ENCODE measurements at regions of chr17 and their contacts with region 1.

Region 1: GRCh38 chr17:48625495-48626244 is 488 bp downstream of the HOXB9 start:
- DNase-seq: peak in 3 of 5 donors; percentile 39 to 59 (median 48)
- H3K4me3 ChIP-seq: peak overlapping the region in 1 of 2 donors; percentile 44
- H3K4me3 Mint-ChIP-seq: peak overlapping the region; percentile 69 to 89 (median 84)
- H3K27ac ChIP-seq: no peak overlapping the region
- H3K27ac Mint-ChIP-seq: peak overlapping the region in 2 of 7 donors; percentile 18 to 62
- H3K4me1 ChIP-seq: peaks cover 28% of the 10 kb centered on the region
- H3K4me1 Mint-ChIP-seq: peaks cover 8 to 35% (median 8%) of the 10 kb centered on the region in 4 donors
- H3K27me3 ChIP-seq: peaks cover 70% of the 10 kb centered on the region
- H3K27me3 Mint-ChIP-seq: peaks cover 69 to 80% of the 10 kb centered on the region in 2 donors

Region 2: GRCh38 chr17:48610282-48611211 is 15.1 kb before region 1 on chr17 and contains the start of gene HOXB7:
- CTCF ChIA-PET with region 1: interaction called, 16 read pairs
- POLR2A ChIA-PET with region 1: interaction called, 6 read pairs
- intact Hi-C with region 1: loop called (anchors 2 kb)
- DNase-seq: peak in 2 of 5 donors; percentile 50 to 56
- H3K4me3 ChIP-seq: peak within 1 kb of the TSS; percentile 64 to 76
- H3K4me3 Mint-ChIP-seq: peak within 1 kb of the TSS; percentile 86 to 93 (median 90)
- H3K27ac ChIP-seq: no peak within 1 kb of the TSS
- H3K27ac Mint-ChIP-seq: peak within 1 kb of the TSS in 6 of 7 donors; percentile 13 to 93 (median 69)
- H3K4me1 ChIP-seq: peaks cover 51% of the 10 kb centered on the region
- H3K4me1 Mint-ChIP-seq: peaks cover 23 to 49% (median 34%) of the 10 kb centered on the region in 4 donors
- H3K27me3 ChIP-seq: peaks cover 47% of the 10 kb centered on the region
- H3K27me3 Mint-ChIP-seq: peaks cover 35 to 65% of the 10 kb centered on the region in 2 donors
- total RNA-seq, gene HOXB7: 0.25 TPM in 1 of 2 experiments, not detected in the other

Region 3: GRCh38 chr17:48636177-48637018 is 10.7 kb after region 1 on chr17:
- CTCF ChIA-PET with region 1: interaction called, 31 read pairs
- POLR2A ChIA-PET with region 1: no interaction called
- intact Hi-C with region 1: no loop called
- DNase-seq: peak in 3 of 5 donors; percentile 45 to 65 (median 60)
- H3K4me3 ChIP-seq: no peak overlapping the region
- H3K4me3 Mint-ChIP-seq: peak overlapping the region in 5 of 8 donors; percentile 6 to 46 (median 29)
- H3K27ac ChIP-seq: no peak overlapping the region
- H3K27ac Mint-ChIP-seq: peak overlapping the region in 1 of 7 donors; percentile 55
- H3K4me1 ChIP-seq: peaks cover 15% of the 10 kb centered on the region
- H3K4me1 Mint-ChIP-seq: peaks cover 1 to 19% (median 11%) of the 10 kb centered on the region in 4 donors
- H3K27me3 ChIP-seq: peaks cover 64% of the 10 kb centered on the region
- H3K27me3 Mint-ChIP-seq: peaks cover 64 to 78% of the 10 kb centered on the region in 2 donors

Region 4: GRCh38 chr17:48663134-48663924 is 37.7 kb after region 1 on chr17:
- CTCF ChIA-PET with region 1: no interaction called
- POLR2A ChIA-PET with region 1: no interaction called
- intact Hi-C with region 1: no loop called
- DNase-seq: no peak
- H3K4me3 ChIP-seq: no peak overlapping the region
- H3K4me3 Mint-ChIP-seq: no peak overlapping the region
- H3K27ac ChIP-seq: no peak overlapping the region
- H3K27ac Mint-ChIP-seq: no peak overlapping the region
- H3K4me1 ChIP-seq: no peaks in the 10 kb centered on the region
- H3K4me1 Mint-ChIP-seq: no peaks in the 10 kb centered on the region
- H3K27me3 ChIP-seq: no peaks in the 10 kb centered on the region
- H3K27me3 Mint-ChIP-seq: peaks cover 18 to 20% of the 10 kb centered on the region in 2 donors

Measured in CD4-positive, alpha-beta memory T cell (primary cell).